ENCODE measurements at regions of chr5 and their contacts with region 1.

Region 1: DNA sequence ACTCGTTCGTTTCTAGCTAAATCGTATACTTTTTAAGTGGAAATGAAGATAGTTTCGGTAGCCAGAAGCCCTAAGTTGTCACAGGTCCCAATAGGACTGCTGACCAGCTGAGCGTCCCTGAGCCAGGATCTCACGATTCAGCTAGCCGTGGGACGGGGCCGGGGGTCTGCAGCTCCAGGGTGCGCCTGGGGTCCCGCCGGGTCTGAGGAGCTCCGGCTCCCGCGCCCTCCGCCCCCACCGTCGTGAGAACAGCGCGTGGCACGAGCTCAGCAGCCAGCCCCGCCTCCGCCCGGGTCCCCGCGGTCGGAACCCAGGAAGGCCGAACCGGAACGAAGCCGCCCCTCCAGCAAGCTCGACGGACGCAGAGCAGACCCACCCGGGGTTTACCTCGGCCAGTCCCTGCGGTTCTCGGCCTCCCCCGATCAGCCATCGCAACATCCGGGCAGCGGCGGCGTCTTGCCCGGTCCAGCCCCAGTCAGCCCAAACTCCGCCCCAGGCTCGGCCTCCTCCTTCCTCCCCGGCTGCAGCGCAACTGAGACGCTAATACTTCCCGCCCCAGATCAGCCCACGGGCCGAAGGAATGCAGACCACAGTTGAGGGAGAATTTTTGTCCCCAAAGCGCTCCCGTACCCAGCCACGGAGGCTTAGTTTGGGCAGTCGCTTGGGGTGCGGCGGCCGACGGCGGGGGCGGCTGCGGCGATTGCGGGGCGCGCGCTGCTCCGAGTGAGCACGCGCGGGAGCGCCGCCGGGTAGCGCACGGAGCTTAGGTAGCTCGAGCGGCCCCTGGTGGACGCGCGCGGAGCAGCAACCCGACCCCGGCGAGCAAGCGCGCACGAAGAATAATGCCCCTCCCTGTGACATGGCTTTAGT is at the start of gene WDR41:
- DNase-seq: peak; percentile 87
- ATAC-seq: peak; percentile 82
- H3K4me3 Mint-ChIP-seq: peak within 1 kb of the TSS; percentile 91
- H3K27ac Mint-ChIP-seq: peak within 1 kb of the TSS; percentile 93
- H3K4me1 Mint-ChIP-seq: peaks cover 22% of the 10 kb centered on the region
- H3K27me3 Mint-ChIP-seq: peaks cover 7% of the 10 kb centered on the region
- CTCF ChIP-seq: no peak
- total RNA-seq, gene WDR41: 29.2 and 33.0 TPM in 2 replicates

Region 2: GRCh38 chr5:76867827-76868693 is 624.0 kb before region 1 on chr5:
- CTCF ChIA-PET with region 1: interaction called, 8 read pairs
- POLR2A ChIA-PET with region 1: no interaction called
- intact Hi-C with region 1: loop called (anchors 1 kb)
- DNase-seq: peak; percentile 17
- ATAC-seq: peak; percentile 90
- H3K4me3 Mint-ChIP-seq: no peak overlapping the region
- H3K27ac Mint-ChIP-seq: no peak overlapping the region
- H3K4me1 Mint-ChIP-seq: peaks cover 3% of the 10 kb centered on the region
- H3K27me3 Mint-ChIP-seq: no peaks in the 10 kb centered on the region
- CTCF ChIP-seq: no peak

Region 3: DNA sequence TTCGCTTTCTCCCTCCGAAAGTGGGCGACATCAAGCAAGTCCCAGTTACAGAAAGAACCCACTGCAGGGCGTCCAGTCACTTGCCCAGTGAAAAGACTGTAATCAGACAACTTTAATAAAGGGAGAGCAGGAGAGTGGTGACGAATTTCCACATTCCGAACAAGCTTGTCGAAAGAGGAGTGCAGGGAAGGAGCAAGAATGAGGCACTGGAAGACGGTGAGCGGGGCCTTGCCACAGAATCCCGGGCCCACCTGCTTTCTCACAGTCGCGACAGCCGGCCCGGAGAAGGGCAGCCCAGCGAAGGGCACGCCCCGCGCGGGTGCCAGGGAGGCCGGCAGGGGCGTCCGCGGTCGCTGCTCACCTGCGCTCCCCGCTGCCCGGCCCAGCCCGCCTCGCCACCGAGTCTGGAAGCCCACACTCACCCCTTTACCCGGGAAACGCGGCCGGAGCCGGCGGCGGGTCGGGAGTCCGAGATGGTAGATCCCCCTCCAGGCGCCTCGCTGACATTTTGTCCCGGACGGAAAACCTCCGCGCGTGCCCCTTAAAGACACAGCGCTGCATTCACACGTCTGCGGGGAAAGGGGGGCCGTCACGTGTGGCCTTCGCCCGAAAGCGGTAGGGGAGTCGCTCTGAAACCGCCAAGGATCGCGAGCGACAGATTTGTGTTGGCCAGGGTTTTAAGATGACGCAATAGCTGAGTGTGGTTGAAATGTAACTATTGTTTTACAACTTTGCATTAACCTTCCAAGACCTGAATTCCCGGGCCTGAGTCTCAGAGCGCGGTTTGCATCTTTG is 405.1 kb before region 1 on chr5 and contains the start of gene ZBED3:
- CTCF ChIA-PET with region 1: interaction called, 4 read pairs
- POLR2A ChIA-PET with region 1: no interaction called
- intact Hi-C with region 1: loop called (anchors 1 kb)
- DNase-seq: peak; percentile 49
- ATAC-seq: peak; percentile 83
- H3K4me3 Mint-ChIP-seq: peak within 1 kb of the TSS; percentile 93
- H3K27ac Mint-ChIP-seq: peak within 1 kb of the TSS; percentile 51
- H3K4me1 Mint-ChIP-seq: peaks cover 14% of the 10 kb centered on the region
- H3K27me3 Mint-ChIP-seq: peaks cover 7% of the 10 kb centered on the region
- CTCF ChIP-seq: no peak
- total RNA-seq, gene ZBED3: 3.2 and 3.5 TPM in 2 replicates

Region 4: GRCh38 chr5:77224712-77225355 is 267.2 kb before region 1 on chr5:
- CTCF ChIA-PET with region 1: no interaction called
- POLR2A ChIA-PET with region 1: no interaction called
- intact Hi-C with region 1: loop called (anchors 10 kb)
- DNase-seq: no peak
- ATAC-seq: no peak
- H3K4me3 Mint-ChIP-seq: no peak overlapping the region
- H3K27ac Mint-ChIP-seq: no peak overlapping the region
- H3K4me1 Mint-ChIP-seq: no peaks in the 10 kb centered on the region
- H3K27me3 Mint-ChIP-seq: peaks cover 12% of the 10 kb centered on the region
- CTCF ChIP-seq: no peak

Region 5: DNA sequence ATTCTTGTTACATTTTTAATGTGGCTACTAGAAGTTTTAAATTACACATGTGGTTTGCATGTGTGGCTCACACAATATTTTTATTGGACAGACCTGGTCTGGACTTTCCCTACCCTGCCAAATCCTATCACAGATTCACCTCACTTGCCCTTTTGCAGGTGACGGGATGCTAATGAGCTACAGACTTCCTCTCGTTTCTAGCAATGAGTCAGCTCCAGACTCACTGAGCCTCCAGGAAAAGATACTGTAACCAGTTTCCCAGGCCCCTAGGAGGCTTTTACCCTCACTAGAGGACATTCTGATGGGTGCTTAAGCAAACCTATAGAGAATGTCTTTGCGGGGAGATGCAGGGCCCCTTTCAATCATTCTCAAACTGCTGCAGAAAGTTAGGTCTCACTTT is 135.3 kb before region 1 on chr5:
- CTCF ChIA-PET with region 1: no interaction called
- POLR2A ChIA-PET with region 1: no interaction called
- intact Hi-C with region 1: loop called (anchors 5 kb)
- DNase-seq: no peak
- ATAC-seq: peak; percentile 68
- H3K4me3 Mint-ChIP-seq: no peak overlapping the region
- H3K27ac Mint-ChIP-seq: no peak overlapping the region
- H3K4me1 Mint-ChIP-seq: peaks cover 10% of the 10 kb centered on the region
- H3K27me3 Mint-ChIP-seq: no peaks in the 10 kb centered on the region
- CTCF ChIP-seq: no peak

Region 6: GRCh38 chr5:77623203-77623740 is 131.3 kb after region 1 on chr5:
- CTCF ChIA-PET with region 1: no interaction called
- POLR2A ChIA-PET with region 1: no interaction called
- intact Hi-C with region 1: no loop called
- DNase-seq: no peak
- ATAC-seq: no peak
- H3K4me3 Mint-ChIP-seq: no peak overlapping the region
- H3K27ac Mint-ChIP-seq: no peak overlapping the region
- H3K4me1 Mint-ChIP-seq: no peaks in the 10 kb centered on the region
- H3K27me3 Mint-ChIP-seq: peaks cover 55% of the 10 kb centered on the region
- CTCF ChIP-seq: no peak

Region 7: GRCh38 chr5:77663090-77663863 is 171.3 kb after region 1 on chr5:
- CTCF ChIA-PET with region 1: no interaction called
- POLR2A ChIA-PET with region 1: no interaction called
- intact Hi-C with region 1: no loop called
- DNase-seq: no peak
- ATAC-seq: no peak
- H3K4me3 Mint-ChIP-seq: no peak overlapping the region
- H3K27ac Mint-ChIP-seq: no peak overlapping the region
- H3K4me1 Mint-ChIP-seq: no peaks in the 10 kb centered on the region
- H3K27me3 Mint-ChIP-seq: peaks cover 9% of the 10 kb centered on the region
- CTCF ChIP-seq: no peak

Region 8: GRCh38 chr5:78221964-78222451 is 730.0 kb after region 1 on chr5:
- CTCF ChIA-PET with region 1: no interaction called
- POLR2A ChIA-PET with region 1: no interaction called
- intact Hi-C with region 1: loop called (anchors 5 kb)
- DNase-seq: peak; percentile 47
- ATAC-seq: peak; percentile 100
- H3K4me3 Mint-ChIP-seq: peak overlapping the region; percentile 1
- H3K27ac Mint-ChIP-seq: peak overlapping the region; percentile 54
- H3K4me1 Mint-ChIP-seq: peaks cover 18% of the 10 kb centered on the region
- H3K27me3 Mint-ChIP-seq: no peaks in the 10 kb centered on the region
- CTCF ChIP-seq: no peak

Region 9: DNA sequence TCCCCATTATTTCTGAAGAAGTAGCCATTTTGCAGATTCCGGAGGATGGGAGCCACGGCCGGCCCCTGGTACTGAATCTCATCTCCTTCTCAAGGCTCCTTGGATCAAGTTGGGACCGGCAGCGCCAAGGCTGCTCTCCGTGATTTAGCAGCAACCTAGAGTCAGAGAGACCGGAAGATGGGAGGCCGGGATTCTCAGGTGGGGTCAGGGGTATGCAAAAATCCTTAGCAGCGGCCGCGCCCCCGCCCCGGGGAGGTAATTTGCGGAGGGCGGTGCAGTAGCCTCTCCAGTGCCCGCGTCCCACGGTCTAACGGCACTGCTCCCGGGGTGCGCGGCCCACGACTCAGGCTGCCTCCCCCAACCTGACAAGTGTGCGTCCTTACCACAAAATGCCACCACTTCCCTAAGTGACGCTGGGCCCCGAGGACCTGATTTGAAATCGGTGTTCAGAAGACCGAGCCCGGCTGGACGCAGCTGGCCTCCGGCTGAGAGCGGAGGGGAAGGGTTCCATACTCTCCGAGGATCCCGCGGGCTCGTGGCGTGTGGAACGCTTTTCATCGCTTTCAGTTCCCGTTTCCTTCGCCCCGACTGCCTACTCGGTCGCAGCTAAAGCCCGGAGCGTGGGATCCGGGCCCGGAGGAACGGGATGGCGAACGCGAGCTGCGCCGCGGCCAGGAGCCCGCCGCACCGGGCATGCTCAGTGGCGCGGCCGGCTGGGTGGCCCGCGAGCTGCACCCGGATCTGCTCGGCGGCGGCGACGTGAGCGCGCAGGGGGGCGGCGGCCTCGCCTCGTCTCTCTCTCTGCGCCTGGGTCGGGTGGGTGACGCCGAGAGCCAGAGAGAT is 868.0 kb after region 1 on chr5 and contains the start of gene SCAMP1:
- CTCF ChIA-PET with region 1: no interaction called
- POLR2A ChIA-PET with region 1: no interaction called
- intact Hi-C with region 1: loop called (anchors 2 kb)
- DNase-seq: peak; percentile 99
- ATAC-seq: peak; percentile 87
- H3K4me3 Mint-ChIP-seq: peak within 1 kb of the TSS; percentile 95
- H3K27ac Mint-ChIP-seq: peak within 1 kb of the TSS; percentile 96
- H3K4me1 Mint-ChIP-seq: peaks cover 33% of the 10 kb centered on the region
- H3K27me3 Mint-ChIP-seq: no peaks in the 10 kb centered on the region
- CTCF ChIP-seq: no peak
- total RNA-seq, gene SCAMP1: 8.5 and 9.6 TPM in 2 replicates

Measured in activated B cell treated with CpG ODN at 0.5 μM for 24 hours (primary cell).